ENCODE measurements at regions of chr2 and their contacts with region 1.

Region 1: GRCh38 chr2:137838255-137839092 is 125.8 kb upstream of the HNMT start:
- DNase-seq: no peak
- ATAC-seq: no peak
- H3K4me3 Mint-ChIP-seq: no peak overlapping the region
- H3K27ac Mint-ChIP-seq: no peak overlapping the region
- H3K4me1 Mint-ChIP-seq: no peaks in the 10 kb centered on the region
- H3K27me3 Mint-ChIP-seq: no peaks in the 10 kb centered on the region

Region 2: DNA sequence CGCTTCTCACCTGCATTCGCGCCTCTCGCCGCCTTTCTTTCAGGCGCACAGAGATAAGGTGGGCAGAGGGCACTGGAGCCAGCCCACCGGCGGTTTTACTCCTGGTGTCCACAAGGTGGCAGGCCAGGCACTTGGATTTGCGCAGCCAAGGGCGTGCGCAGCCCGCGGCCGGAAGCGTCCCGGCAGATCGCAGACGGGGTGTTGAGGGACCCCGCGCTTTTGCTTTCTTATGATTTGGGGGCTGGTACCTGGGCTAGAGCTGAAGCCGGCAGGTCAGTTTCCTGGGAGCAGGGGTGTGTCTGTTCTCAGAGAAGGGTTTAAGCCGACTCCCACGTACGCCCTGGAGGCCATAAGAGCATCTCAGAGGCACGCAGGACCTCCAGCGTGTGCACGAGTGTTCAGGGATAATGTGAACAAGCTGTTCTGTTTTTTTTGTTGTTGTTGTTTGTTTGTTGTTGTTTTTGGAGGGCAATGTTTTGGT is 1414.9 kb before region 1 on chr2:
- CTCF ChIA-PET with region 1: interaction called, 17 read pairs
- DNase-seq: peak; percentile 88
- ATAC-seq: peak; percentile 99
- H3K4me3 Mint-ChIP-seq: peak overlapping the region; percentile 78
- H3K27ac Mint-ChIP-seq: peak overlapping the region; percentile 36
- H3K4me1 Mint-ChIP-seq: peaks cover 22% of the 10 kb centered on the region
- H3K27me3 Mint-ChIP-seq: peaks cover 72% of the 10 kb centered on the region

Region 3: GRCh38 chr2:137865954-137866540 is 27.6 kb after region 1 on chr2:
- CTCF ChIA-PET with region 1: no interaction called
- DNase-seq: peak; percentile 54
- ATAC-seq: no peak
- H3K4me3 Mint-ChIP-seq: no peak overlapping the region
- H3K27ac Mint-ChIP-seq: no peak overlapping the region
- H3K4me1 Mint-ChIP-seq: no peaks in the 10 kb centered on the region
- H3K27me3 Mint-ChIP-seq: peaks cover 6% of the 10 kb centered on the region